ENCODE measurements at regions of chr2 and their contacts with region 1.

Region 1: DNA sequence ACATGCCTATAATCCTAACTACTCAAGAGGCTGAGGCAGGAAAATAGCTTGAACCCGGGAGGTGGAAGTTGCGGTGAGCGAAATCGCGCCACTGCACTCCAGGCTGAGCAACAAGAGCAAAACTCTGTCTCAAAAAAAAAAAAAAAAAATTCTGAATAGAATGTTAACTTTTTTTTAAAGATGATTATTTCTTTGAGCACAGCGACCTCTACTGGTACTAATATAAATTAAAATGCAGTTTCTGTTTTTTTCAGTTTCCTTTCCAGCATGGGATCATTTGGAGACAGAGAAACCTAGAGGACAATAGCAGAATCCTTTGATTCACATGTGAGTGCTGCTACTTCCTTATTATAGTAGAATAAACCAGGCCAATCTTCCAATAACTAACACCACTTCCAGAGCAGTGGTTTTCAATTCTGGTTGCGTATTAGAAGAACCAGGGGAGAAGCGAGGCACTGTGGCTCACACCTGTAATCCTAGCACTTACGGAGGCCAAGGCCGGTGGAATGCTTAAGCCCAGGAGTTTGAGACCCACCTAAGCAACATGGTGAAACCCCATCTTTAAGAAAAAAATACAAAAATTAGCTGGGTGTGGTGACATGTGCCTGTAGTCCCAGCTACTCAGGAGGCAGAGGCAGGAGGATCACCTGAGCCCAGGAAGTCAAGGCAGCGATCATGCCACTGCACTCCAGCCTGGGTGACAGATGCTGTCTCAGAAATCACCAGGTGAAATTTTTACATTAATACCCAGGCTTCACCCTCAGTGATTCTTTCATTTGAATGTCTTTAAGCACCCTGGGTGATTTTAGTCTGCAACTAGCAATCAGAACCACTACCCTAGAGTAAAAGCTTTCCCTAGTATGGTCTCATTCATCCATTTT is 10.1 kb downstream of the SRSF7 start:
- DNase-seq: no peak
- H3K4me3 ChIP-seq: no peak overlapping the region
- H3K27ac ChIP-seq: peak overlapping the region; percentile 12 to 60
- H3K4me1 ChIP-seq: peaks cover 0 to 30% (median 10%) of the 10 kb centered on the region in 4 donors
- H3K27me3 ChIP-seq: no peaks in the 10 kb centered on the region
- CTCF ChIP-seq: peak; percentile 71 to 85

Region 2: DNA sequence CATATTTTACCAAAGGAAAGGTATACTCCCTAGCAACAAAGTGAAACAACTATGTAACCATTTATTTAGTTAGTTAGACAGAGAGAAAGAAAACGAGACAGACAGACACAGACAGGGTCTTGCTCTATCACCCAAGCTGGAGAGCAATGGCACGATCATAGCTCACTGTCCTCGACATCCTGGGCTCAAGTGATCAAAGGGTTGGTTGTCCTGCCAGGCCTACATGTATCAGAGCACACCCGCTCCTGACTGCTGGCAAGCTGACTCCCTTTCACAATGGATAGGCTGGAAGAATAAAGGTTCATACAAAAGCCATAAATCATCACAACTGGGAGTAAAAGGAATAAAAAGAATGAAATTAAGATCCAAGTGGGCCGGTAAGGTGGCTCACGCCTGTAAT is 417.5 kb before region 1 on chr2:
- intact Hi-C with region 1: loop called (anchors 10 kb)
- DNase-seq: no peak
- H3K4me3 ChIP-seq: no peak overlapping the region
- H3K27ac ChIP-seq: no peak overlapping the region
- H3K4me1 ChIP-seq: peaks cover 0 to 7% (median 0%) of the 10 kb centered on the region in 4 donors
- H3K27me3 ChIP-seq: no peaks in the 10 kb centered on the region
- CTCF ChIP-seq: no peak

Region 3: GRCh38 chr2:38377050-38377828 is 363.9 kb before region 1 on chr2 and contains the start of gene ATL2:
- intact Hi-C with region 1: no loop called
- DNase-seq: peak; percentile 95 to 97
- H3K4me3 ChIP-seq: peak within 1 kb of the TSS; percentile 74 to 96
- H3K27ac ChIP-seq: peak within 1 kb of the TSS; percentile 95 to 100
- H3K4me1 ChIP-seq: peaks cover 0 to 32% (median 23%) of the 10 kb centered on the region in 4 donors
- H3K27me3 ChIP-seq: no peaks in the 10 kb centered on the region
- CTCF ChIP-seq: no peak

Region 4: DNA sequence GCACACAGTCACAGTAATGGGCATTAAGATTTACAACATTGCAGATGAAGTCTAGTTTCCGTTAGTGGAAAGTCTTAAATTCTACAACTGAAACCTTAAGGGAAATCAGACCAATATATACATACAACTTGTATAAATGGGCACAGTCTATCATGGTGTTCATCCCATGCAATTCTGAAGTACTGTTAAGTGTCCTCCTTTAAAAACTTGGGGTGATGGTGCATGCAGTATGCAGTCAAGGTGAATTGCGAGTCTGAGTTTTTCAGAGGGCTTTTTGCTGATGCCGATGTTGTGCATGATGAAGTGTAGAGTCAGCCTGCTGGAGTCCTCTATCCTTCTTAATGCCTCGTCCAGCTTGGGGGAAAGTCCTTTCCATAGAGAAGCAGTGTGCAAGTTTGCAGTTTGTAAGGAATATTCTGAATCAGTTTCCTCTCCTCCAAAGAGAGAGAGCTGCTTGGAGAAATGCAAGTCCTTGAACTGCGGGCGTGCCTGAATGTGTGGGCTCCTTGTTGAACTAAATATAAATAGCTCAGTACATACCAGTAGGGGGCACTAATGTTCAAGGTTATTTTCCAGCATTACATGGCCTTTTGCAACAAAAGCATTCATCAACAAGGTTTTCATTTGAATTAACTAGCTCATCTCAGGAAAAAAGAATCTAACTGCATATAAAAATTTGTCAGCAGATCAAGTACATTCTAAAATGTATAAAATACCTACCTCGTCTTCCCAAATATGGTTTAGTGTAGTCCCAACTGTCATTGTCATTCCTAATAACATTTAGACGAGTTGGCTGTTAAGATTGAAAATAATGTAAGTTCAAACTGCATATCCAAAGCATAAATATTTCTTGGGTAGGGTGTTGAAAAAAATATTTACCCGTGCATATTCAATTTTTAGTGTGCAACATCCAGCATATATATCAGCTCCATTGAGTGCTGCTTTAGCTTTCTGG is 159.6 kb before region 1 on chr2:
- intact Hi-C with region 1: loop called (anchors 5 kb)
- DNase-seq: no peak
- H3K4me3 ChIP-seq: no peak overlapping the region
- H3K27ac ChIP-seq: no peak overlapping the region
- H3K4me1 ChIP-seq: peaks cover 0 to 45% (median 3%) of the 10 kb centered on the region in 4 donors
- H3K27me3 ChIP-seq: no peaks in the 10 kb centered on the region
- CTCF ChIP-seq: peak; percentile 52 to 77

Region 5: DNA sequence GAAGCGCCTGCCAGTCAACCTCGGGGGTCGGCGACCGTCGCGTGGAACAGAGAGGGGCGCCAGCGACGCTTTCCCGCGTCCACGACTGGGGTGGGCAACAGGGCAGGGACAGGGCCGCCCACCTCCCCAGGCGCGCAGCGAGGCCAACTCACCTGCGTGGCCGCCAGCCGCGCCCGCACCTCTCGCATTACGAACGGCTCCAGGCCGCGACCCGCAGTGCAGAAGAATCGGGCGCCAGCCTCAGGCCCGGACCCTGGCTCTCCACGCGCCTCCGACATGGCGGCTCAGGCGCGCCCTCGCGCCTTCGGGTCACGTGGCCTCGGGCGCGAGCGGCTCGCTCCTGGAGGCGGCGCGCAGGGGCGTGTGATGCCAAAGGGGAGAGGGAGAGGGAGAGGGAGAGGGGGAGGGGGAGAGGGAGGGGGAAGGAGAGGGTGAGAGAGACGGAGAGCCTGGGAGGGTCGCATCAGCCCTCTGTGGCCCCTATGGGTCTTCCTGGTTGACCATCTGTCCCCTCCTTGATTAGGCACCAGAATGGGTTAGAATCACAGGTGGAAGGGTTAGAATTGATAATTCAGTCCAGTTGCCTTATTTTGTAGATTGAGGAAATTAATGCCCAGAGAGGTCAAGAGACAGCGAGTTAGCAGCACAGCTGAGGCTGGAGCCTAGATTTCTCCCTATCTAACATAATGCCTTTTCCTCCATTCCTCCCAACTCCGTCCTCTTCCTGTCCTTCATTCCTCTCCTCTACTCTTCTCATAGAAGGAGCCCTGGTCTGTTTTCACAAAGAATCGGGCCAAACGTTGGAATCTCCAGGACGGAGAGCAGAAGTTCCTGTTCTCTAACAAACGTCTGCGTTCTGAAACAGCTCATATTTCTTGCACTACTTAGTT is 1038.1 kb after region 1 on chr2 and contains the start of gene THUMPD2:
- intact Hi-C with region 1: no loop called
- DNase-seq: peak; percentile 66 to 78
- H3K4me3 ChIP-seq: peak within 1 kb of the TSS; percentile 82 to 96
- H3K27ac ChIP-seq: peak within 1 kb of the TSS; percentile 88 to 95
- H3K4me1 ChIP-seq: peaks cover 0 to 50% (median 16%) of the 10 kb centered on the region in 4 donors
- H3K27me3 ChIP-seq: no peaks in the 10 kb centered on the region
- CTCF ChIP-seq: no peak